ENCODE measurements at regions of chr19 and their contacts with region 1.

Region 1: GRCh38 chr19:5790573-5791520 is at the start of gene DUS3L:
- DNase-seq: peak; percentile 95 to 98 (median 97)
- H3K4me3 ChIP-seq: peak within 1 kb of the TSS; percentile 69 to 100 (median 93)
- H3K27ac ChIP-seq: peak within 1 kb of the TSS; percentile 70 to 100 (median 98)
- H3K27me3 ChIP-seq: no peaks in the 10 kb centered on the region
- CTCF ChIP-seq: peak in 17 of 56 donors; percentile 3 to 35 (median 18)
- total RNA-seq, gene DUS3L: 12.7 to 37.4 (median 23.8) TPM

Region 2: GRCh38 chr19:5680437-5681368 is 110.1 kb before region 1 on chr19 and contains the starts of genes HSD11B1L and MICOS13:
- intact Hi-C with region 1: loop called in 1 of 2 experiments (anchors 2 kb)
- DNase-seq: peak; percentile 99 to 100 (median 99)
- H3K4me3 ChIP-seq: peak within 1 kb of the TSS; percentile 64 to 100 (median 91)
- H3K27ac ChIP-seq: peak within 1 kb of the TSS; percentile 80 to 99 (median 96)
- H3K27me3 ChIP-seq: no peaks in the 10 kb centered on the region
- CTCF ChIP-seq: peak in 36 of 56 donors; percentile 3 to 54 (median 35)
- total RNA-seq, gene HSD11B1L: 20.4 to 80.3 (median 55.4) TPM
- total RNA-seq, gene MICOS13: 42.0 to 91.5 (median 69.5) TPM

Region 3: GRCh38 chr19:5891938-5892771 is 101.3 kb after region 1 on chr19:
- intact Hi-C with region 1: loop called in 1 of 2 experiments (anchors 5 kb)
- DNase-seq: peak in 3 of 10 donors; percentile 33 to 48 (median 48)
- H3K4me3 ChIP-seq: no peak overlapping the region
- H3K27ac ChIP-seq: no peak overlapping the region
- H3K27me3 ChIP-seq: peaks cover 0 to 19% (median 4%) of the 10 kb centered on the region in 45 donors
- CTCF ChIP-seq: peak in 53 of 56 donors; percentile 26 to 79 (median 60)

Region 4: DNA sequence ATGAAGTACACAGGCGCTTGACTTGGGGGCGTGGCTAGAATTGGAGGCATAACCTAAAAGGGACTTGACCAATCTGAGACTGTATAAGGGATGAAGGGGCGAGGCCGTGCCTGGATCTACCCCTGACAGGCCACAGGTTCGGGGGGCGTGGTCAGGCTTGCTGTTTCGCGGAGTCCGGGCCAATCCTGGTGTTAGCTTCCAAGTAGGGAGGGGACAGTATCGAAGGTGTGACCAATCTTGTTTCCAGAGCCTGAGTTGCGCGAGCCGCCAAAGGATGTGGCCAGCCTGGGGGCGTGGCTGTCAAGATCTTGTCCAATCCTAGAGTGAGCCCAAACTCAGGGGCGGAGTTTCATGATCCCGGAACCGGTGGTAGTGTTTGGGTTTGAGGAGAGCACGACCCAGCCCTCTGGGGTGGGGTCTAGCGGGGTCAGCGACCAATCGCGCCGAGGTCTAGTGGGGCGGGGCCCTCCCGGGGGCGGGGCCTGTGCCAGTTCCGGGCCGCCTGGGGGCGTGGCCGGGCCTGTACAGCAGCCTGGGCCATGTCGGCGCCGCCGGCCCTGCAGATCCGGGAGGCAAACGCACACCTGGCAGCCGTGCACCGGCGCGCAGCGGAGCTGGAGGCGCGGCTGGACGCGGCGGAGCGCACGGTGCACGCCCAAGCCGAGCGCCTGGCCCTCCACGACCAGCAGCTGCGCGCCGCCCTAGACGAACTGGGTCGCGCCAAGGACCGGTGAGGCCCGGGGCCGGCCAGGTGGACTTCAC is 113.7 kb after region 1 on chr19 and contains the start of gene VMAC:
- intact Hi-C with region 1: loop called (anchors 5 kb)
- DNase-seq: peak; percentile 97 to 100 (median 100)
- H3K4me3 ChIP-seq: peak within 1 kb of the TSS; percentile 69 to 100 (median 94)
- H3K27ac ChIP-seq: peak within 1 kb of the TSS; percentile 36 to 94 (median 86)
- H3K27me3 ChIP-seq: no peaks in the 10 kb centered on the region
- CTCF ChIP-seq: peak in 25 of 56 donors; percentile 4 to 49 (median 21)
- total RNA-seq, gene VMAC: 3.0 to 14.3 (median 7.2) TPM